ENCODE measurements at regions of chr3 and their contacts with region 1.

Region 1: GRCh38 chr3:179015551-179016020 is 56.0 kb downstream of the ZMAT3 start:
- DNase-seq: peak; percentile 50
- H3K4me3 ChIP-seq: no peak overlapping the region; a peak in 1 of 4 replicates
- H3K27ac ChIP-seq: no peak overlapping the region; a peak in 1 of 4 replicates
- H3K4me1 ChIP-seq: peaks cover 0 to 8% of the 10 kb centered on the region in 2 experiments; a peak in 2 of 4 replicates
- H3K27me3 ChIP-seq: no peaks in the 10 kb centered on the region
- CTCF ChIP-seq: peak; percentile 92
- EP300 ChIP-seq: no peak
- RAD21 ChIP-seq: peak; percentile 89

Region 2: DNA sequence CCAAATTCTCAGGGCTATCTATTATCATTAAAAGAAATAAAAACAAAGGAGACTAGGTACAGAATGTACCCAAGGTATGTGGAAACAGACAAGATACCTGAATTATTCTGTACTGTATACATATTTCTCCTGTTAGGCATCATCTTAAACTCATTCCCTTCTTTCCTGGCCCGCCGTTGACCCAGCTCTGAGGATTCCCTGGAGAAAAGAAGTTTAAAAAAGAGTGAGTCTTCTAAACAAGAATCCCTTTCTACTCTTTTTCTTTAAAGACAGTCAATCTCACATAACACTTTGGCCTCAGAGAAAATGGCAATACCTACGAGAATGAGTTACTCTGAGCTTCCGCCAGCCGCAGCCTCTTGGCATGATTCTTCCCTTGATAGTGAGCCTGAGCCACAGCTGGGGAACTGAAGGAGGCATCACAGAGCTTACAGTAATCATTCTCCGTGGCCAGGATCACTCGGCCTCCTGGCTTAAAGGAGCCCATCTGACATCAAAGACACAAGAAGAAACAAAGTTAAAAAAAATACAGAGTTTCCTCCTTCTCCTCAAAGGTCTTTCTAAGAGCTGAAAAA is 11.8 kb after region 1 on chr3:
- CTCF ChIA-PET with region 1: interaction called, 32 read pairs
- POLR2A ChIA-PET with region 1: no interaction called
- DNase-seq: no peak
- H3K4me3 ChIP-seq: no peak overlapping the region
- H3K27ac ChIP-seq: peak overlapping the region; percentile 19 to 45; a peak in 2 of 4 replicates
- H3K4me1 ChIP-seq: 0 out of 4 replicates have a peak, but pooled peaks cover 0 to 6% of the 10 kb centered on the region in 2 experiments
- H3K27me3 ChIP-seq: no peaks in the 10 kb centered on the region
- CTCF ChIP-seq: no peak
- EP300 ChIP-seq: no peak
- RAD21 ChIP-seq: no peak

Region 3: GRCh38 chr3:179063945-179064560 is 48.5 kb after region 1 on chr3:
- CTCF ChIA-PET with region 1: interaction called, 16 read pairs
- POLR2A ChIA-PET with region 1: no interaction called
- DNase-seq: no peak
- H3K4me3 ChIP-seq: no peak overlapping the region
- H3K27ac ChIP-seq: no peak overlapping the region
- H3K4me1 ChIP-seq: peaks cover 4 to 10% of the 10 kb centered on the region in 2 experiments; a peak in 3 of 4 replicates
- H3K27me3 ChIP-seq: no peaks in the 10 kb centered on the region
- CTCF ChIP-seq: no peak
- EP300 ChIP-seq: no peak
- RAD21 ChIP-seq: no peak

Region 4: GRCh38 chr3:179309225-179310078 is 293.9 kb after region 1 on chr3:
- CTCF ChIA-PET with region 1: interaction called, 22 read pairs
- POLR2A ChIA-PET with region 1: no interaction called
- DNase-seq: no peak
- H3K4me3 ChIP-seq: no peak overlapping the region
- H3K27ac ChIP-seq: no peak overlapping the region
- H3K4me1 ChIP-seq: peaks cover 0 to 6% of the 10 kb centered on the region in 2 experiments; a peak in 1 of 4 replicates
- H3K27me3 ChIP-seq: no peaks in the 10 kb centered on the region
- CTCF ChIP-seq: no peak
- EP300 ChIP-seq: no peak
- RAD21 ChIP-seq: no peak

Region 5: GRCh38 chr3:179322286-179323196 is 307.0 kb after region 1 on chr3 and contains the start of gene ZNF639:
- CTCF ChIA-PET with region 1: interaction called, 71 read pairs
- POLR2A ChIA-PET with region 1: no interaction called
- DNase-seq: peak; percentile 99
- H3K4me3 ChIP-seq: peak within 1 kb of the TSS; percentile 77 to 97
- H3K27ac ChIP-seq: peak within 1 kb of the TSS; percentile 81 to 89
- H3K4me1 ChIP-seq: peaks cover 0 to 6% of the 10 kb centered on the region in 2 experiments; a peak in 2 of 4 replicates
- H3K27me3 ChIP-seq: no peaks in the 10 kb centered on the region
- CTCF ChIP-seq: peak; percentile 73
- EP300 ChIP-seq: peak in 1 of 2 experiments; percentile 46; a peak in 1 of 4 replicates
- RAD21 ChIP-seq: peak; percentile 46
- polyA plus RNA-seq, gene ZNF639: 9.6 and 11.4 TPM in 2 replicates

Measured in SK-N-SH (cell line).